ENCODE measurements at regions of chr3 and their contacts with region 1.

Region 1: GRCh38 chr3:4712143-4712542 is 219.0 kb downstream of the ITPR1 start:
- DNase-seq: no peak
- H3K4me3 Mint-ChIP-seq: no peak overlapping the region
- H3K27ac Mint-ChIP-seq: no peak overlapping the region
- H3K4me1 Mint-ChIP-seq: peaks cover 1% of the 10 kb centered on the region
- H3K27me3 Mint-ChIP-seq: no peaks in the 10 kb centered on the region

Region 2: DNA sequence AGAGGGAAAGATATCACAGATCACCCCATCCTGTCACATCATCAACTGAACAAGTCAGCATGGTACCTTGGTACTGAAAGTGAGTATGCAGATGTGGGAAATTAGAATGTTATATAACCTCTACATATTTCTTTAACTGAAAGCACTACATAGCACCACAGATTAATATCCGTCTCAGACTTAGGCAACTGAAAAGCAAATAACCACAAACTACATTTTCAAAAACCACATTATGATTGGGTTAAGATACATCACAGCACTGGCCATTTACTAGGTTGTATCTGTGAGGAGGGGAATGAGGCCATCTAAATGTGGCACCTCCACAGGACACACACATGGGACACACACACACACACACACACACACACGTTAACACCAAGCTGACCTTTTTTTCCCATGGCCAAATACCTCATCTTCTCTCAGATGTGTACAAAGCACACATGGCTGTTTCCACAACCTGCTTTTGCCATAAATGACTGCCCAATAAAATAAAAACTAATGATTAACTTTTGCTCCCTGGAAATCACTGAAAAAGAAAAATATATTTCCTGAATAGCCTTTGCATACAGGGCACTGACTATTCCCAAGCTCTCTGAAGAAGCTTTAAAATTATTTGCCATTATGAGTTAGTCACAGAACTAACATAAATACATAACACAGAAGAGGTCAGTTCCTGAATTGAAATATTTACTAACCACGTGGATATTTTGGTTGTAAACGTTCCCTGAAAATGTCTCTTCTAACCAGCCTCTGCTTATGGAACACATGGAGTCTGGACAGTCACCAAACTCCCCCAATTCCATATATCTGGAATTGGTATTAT is 305.2 kb before region 1 on chr3:
- CTCF ChIA-PET with region 1: no interaction called
- POLR2A ChIA-PET with region 1: no interaction called
- intact Hi-C with region 1: no loop called
- DNase-seq: no peak
- H3K4me3 Mint-ChIP-seq: no peak overlapping the region
- H3K27ac Mint-ChIP-seq: no peak overlapping the region
- H3K4me1 Mint-ChIP-seq: peaks cover 47% of the 10 kb centered on the region
- H3K27me3 Mint-ChIP-seq: no peaks in the 10 kb centered on the region

Region 3: DNA sequence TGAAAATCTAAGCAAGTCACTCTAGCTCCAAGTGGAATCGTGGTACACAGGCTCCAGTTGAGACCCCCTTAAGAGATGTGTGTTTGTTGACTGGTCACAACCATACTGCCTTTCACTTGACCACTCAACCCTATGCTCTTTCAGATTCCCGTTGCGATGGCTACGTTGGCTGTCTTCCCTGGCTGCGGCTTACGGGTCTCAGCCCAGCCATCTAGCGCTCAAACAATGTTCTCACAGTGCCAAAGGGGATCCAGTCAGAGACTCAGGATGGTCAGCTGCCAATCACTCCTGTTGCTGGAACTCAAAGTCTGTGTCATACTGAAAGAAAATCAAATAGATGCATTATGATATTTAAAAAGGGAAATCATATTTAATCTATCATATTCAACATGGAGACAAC is 18.6 kb after region 1 on chr3:
- CTCF ChIA-PET with region 1: interaction called, 11 read pairs
- POLR2A ChIA-PET with region 1: no interaction called
- intact Hi-C with region 1: no loop called
- DNase-seq: no peak
- H3K4me3 Mint-ChIP-seq: no peak overlapping the region
- H3K27ac Mint-ChIP-seq: no peak overlapping the region
- H3K4me1 Mint-ChIP-seq: peaks cover 11% of the 10 kb centered on the region
- H3K27me3 Mint-ChIP-seq: no peaks in the 10 kb centered on the region

Region 4: DNA sequence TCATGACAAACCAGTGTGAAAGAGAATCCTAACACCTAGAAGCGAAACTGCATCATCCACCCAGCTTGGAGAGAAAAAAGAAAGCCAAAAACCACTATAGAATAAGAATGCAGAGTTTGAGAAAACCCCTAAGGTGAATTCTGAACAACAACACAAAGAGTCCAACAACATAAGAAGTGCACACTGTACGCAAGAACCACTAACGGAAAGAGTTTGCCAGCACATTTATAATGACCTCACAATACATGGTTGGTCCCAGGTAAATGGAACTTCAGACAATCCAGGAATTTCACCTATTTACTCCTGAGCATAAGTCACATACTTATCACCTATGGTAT is 138.8 kb after region 1 on chr3:
- CTCF ChIA-PET with region 1: interaction called, 12 read pairs
- POLR2A ChIA-PET with region 1: interaction called, 3 read pairs
- intact Hi-C with region 1: no loop called
- DNase-seq: peak; percentile 43
- H3K4me3 Mint-ChIP-seq: peak overlapping the region; percentile 53
- H3K27ac Mint-ChIP-seq: peak overlapping the region; percentile 88
- H3K4me1 Mint-ChIP-seq: peaks cover 88% of the 10 kb centered on the region
- H3K27me3 Mint-ChIP-seq: no peaks in the 10 kb centered on the region

Region 5: DNA sequence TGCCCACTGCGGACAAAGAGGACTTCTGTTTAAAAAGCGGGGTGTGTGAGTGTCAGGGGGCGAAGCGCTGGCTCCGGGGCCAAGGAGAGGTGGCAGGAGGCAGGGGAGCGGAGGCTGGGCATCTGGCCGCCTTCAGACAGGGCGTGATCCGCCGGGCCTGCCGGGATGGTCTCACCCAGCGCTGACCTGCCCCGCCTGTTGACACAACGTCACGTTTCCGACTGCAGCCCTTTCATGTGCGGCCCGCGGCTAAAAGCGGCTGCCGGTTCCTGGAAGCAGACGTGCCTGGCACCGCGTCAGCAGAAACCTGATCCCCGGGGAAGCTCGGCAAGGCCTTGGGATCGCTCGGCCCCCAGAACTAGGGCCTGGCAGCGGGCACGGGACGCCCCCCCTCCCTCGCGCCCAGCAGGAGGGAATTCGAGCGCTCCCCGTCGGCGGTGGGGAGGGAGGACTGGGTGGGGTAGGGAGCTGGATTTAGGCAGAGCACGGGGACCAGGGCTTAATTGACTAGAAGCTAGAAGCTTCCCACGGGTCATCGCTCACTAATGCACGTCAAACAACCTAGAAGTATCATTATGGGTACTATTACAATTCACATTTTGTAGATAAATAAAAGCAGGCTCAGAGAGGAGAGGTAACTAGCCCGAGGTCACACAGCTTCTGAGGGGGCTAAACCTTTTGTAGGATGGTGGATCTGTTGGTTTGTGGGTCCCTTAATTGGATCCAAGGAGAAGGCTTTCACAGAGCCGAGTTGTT is 274.8 kb after region 1 on chr3:
- CTCF ChIA-PET with region 1: interaction called, 204 read pairs
- POLR2A ChIA-PET with region 1: interaction called, 6 read pairs
- intact Hi-C with region 1: no loop called
- DNase-seq: peak; percentile 86
- H3K4me3 Mint-ChIP-seq: peak overlapping the region; percentile 77
- H3K27ac Mint-ChIP-seq: peak overlapping the region; percentile 87
- H3K4me1 Mint-ChIP-seq: peaks cover 60% of the 10 kb centered on the region
- H3K27me3 Mint-ChIP-seq: no peaks in the 10 kb centered on the region

Region 6: GRCh38 chr3:5016218-5017161 is 304.3 kb after region 1 on chr3:
- CTCF ChIA-PET with region 1: interaction called, 10 read pairs
- POLR2A ChIA-PET with region 1: no interaction called
- intact Hi-C with region 1: no loop called
- DNase-seq: peak; percentile 69
- H3K4me3 Mint-ChIP-seq: no peak overlapping the region
- H3K27ac Mint-ChIP-seq: peak overlapping the region; percentile 66
- H3K4me1 Mint-ChIP-seq: peaks cover 77% of the 10 kb centered on the region
- H3K27me3 Mint-ChIP-seq: no peaks in the 10 kb centered on the region

Region 7: GRCh38 chr3:5041315-5041714 is 329.2 kb after region 1 on chr3:
- CTCF ChIA-PET with region 1: interaction called, 14 read pairs
- POLR2A ChIA-PET with region 1: no interaction called
- intact Hi-C with region 1: no loop called
- DNase-seq: no peak
- H3K4me3 Mint-ChIP-seq: no peak overlapping the region
- H3K27ac Mint-ChIP-seq: no peak overlapping the region
- H3K4me1 Mint-ChIP-seq: peaks cover 19% of the 10 kb centered on the region
- H3K27me3 Mint-ChIP-seq: no peaks in the 10 kb centered on the region

Region 8: DNA sequence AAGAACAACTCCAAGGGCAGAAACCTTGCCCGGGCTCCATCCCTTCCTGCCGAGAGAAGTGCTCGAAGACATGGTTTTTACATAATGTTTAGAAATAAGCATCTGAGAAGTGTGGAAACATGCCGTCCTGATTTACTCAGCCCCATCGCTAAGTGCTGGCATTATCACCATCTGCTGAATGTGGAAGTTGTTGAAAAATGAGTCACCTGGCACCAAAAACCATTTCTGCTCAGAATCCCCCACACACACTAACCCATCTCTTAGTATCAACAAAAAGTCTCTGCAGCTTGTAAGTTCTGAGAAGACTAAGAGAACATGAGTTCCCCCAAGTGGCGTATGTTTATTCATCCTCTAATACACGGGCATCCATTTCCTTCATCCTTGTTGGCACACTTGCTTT is 358.9 kb after region 1 on chr3:
- CTCF ChIA-PET with region 1: interaction called, 10 read pairs
- POLR2A ChIA-PET with region 1: no interaction called
- intact Hi-C with region 1: no loop called
- DNase-seq: no peak
- H3K4me3 Mint-ChIP-seq: no peak overlapping the region
- H3K27ac Mint-ChIP-seq: no peak overlapping the region
- H3K4me1 Mint-ChIP-seq: no peaks in the 10 kb centered on the region
- H3K27me3 Mint-ChIP-seq: no peaks in the 10 kb centered on the region

Measured in activated CD4-positive, alpha-beta memory T cell treated with anti-CD3 and anti-CD28 coated beads for 36 hours (primary cell).